Mammary epithelial cell (primary cell): ENCODE measurements at regions of chr5 and their contacts with region 1.

Region 1: GRCh38 chr5:37121027-37121426 is 128.1 kb downstream of the CPLANE1 start:
- DNase-seq: no peak
- H3K4me3 ChIP-seq: no peak overlapping the region
- H3K27ac ChIP-seq: no peak overlapping the region
- H3K4me1 ChIP-seq: no peaks in the 10 kb centered on the region
- H3K27me3 ChIP-seq: no peaks in the 10 kb centered on the region
- CTCF ChIP-seq: no peak

Region 2: DNA sequence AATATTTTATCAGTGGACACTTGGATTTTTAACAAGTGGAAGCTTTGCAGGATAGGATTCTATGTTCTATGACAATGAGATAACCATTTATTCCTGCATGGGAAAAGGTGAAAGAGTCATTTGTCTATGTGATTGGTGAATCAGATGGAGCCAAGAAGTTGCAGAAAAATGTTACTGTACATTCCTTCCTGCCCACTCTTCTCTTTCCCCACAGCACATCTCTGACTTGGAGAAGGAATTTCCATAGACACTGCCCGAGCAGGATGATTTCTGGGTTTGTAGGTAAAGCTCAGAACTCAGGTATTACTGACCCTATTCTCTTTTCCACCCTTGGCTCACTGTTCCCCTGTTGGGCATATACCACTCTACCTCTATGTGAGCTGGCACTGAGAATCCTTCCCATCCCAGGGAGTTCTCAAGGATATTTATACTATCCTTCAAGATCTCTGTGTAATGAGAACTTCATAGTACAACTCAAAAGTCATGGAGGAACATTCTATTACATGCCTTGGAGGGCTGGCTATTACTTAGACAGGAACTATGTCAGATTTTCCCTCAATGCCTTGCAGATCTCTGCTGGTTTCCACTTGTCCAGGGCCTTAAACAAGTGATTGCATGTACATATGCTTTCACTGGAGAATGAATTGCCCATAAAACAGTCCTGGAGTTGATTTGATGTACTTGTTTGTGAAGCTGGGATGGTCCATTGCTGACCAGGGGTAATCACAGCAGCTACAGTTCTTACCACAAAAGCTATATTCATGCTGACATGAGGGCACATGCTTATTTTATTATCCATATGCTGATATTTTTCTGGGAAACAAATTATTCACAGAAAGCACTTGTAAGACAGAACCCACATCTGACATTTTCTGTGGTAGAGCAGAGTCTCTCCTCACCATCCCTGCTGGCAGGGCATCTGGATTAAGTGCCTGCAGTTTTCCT is 490.6 kb before region 1 on chr5:
- CTCF ChIA-PET with region 1: no interaction called
- dilution Hi-C with region 1: no loop called
- in situ Hi-C with region 1: no loop called
- intact Hi-C with region 1: no loop called
- DNase-seq: peak; percentile 79
- H3K4me3 ChIP-seq: no peak overlapping the region
- H3K27ac ChIP-seq: peak overlapping the region; percentile 43
- H3K4me1 ChIP-seq: peaks cover 20% of the 10 kb centered on the region
- H3K27me3 ChIP-seq: no peaks in the 10 kb centered on the region
- CTCF ChIP-seq: no peak

Region 3: DNA sequence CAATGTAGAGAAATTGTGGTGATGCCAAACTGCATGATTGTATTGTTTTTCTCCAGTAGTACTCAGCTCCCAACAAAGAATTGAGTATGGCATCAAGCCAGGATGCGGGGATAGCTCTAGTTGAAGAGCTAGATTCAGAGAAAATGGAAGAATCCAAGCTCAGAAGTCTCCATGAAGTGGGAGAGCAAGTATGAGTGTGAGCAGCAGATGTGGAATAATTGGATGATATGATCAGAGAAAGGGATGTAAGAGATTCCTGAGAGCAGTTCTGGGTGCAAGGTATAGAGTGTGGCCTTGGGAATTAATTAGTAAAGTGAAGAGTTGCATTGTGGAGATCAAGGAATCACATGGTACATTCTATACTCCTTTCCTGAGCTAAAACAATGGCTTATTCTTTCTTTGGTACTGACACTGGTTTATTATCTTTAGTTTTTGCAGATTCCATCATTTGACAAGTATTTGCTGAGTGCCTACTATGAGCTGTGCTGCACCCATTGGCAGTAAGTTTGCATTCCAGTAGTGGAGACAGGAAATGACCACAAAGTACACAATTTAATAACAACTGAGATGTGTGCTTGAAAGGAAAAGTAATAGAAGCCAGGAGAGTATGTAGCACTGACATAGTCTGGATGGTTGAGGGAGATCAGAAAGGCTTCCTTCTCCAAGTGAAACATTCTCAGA is 49.0 kb before region 1 on chr5:
- CTCF ChIA-PET with region 1: interaction called, 10 read pairs
- dilution Hi-C with region 1: no loop called
- in situ Hi-C with region 1: no loop called
- intact Hi-C with region 1: no loop called
- DNase-seq: peak; percentile 72
- H3K4me3 ChIP-seq: no peak overlapping the region
- H3K27ac ChIP-seq: peak overlapping the region; percentile 30
- H3K4me1 ChIP-seq: peaks cover 16% of the 10 kb centered on the region
- H3K27me3 ChIP-seq: no peaks in the 10 kb centered on the region
- CTCF ChIP-seq: no peak